Left lung (tissue), 14 donors: ENCODE measurements at regions of chr17 and their contacts with region 1.

Region 1: GRCh38 chr17:60639019-60639330 is 38.7 kb upstream of the BCAS3 start:
- DNase-seq: no peak
- ATAC-seq: no peak
- H3K4me3 ChIP-seq: no peak overlapping the region
- H3K27ac ChIP-seq: no peak overlapping the region
- H3K4me1 ChIP-seq: peaks cover 0 to 14% of the 10 kb centered on the region in 2 donors
- H3K27me3 ChIP-seq: no peaks in the 10 kb centered on the region
- CTCF ChIP-seq: no peak

Region 2: DNA sequence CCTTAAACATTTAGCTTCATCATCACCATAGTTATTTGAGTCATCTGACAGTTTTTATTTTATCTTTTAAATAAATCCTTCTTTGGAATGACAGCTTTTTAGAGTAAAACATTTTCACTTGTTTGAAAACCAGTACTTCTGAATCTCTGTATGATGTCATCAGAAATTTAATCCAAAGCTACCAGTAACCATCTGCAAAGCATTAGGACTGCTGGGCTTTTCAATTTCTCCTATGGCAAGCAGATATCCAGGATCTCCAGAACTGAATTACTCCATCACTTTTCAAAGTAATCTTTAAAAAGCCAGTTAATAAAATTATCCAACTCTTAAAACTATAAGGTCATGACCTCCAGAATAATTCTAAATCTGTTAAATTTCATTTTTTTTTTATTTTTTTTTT is 165.2 kb before region 1 on chr17:
- intact Hi-C with region 1: no loop called
- DNase-seq: no peak
- ATAC-seq: no peak
- H3K4me3 ChIP-seq: no peak overlapping the region
- H3K27ac ChIP-seq: no peak overlapping the region
- H3K4me1 ChIP-seq: peaks cover 0 to 13% of the 10 kb centered on the region in 2 donors
- H3K27me3 ChIP-seq: no peaks in the 10 kb centered on the region
- CTCF ChIP-seq: no peak

Region 3: DNA sequence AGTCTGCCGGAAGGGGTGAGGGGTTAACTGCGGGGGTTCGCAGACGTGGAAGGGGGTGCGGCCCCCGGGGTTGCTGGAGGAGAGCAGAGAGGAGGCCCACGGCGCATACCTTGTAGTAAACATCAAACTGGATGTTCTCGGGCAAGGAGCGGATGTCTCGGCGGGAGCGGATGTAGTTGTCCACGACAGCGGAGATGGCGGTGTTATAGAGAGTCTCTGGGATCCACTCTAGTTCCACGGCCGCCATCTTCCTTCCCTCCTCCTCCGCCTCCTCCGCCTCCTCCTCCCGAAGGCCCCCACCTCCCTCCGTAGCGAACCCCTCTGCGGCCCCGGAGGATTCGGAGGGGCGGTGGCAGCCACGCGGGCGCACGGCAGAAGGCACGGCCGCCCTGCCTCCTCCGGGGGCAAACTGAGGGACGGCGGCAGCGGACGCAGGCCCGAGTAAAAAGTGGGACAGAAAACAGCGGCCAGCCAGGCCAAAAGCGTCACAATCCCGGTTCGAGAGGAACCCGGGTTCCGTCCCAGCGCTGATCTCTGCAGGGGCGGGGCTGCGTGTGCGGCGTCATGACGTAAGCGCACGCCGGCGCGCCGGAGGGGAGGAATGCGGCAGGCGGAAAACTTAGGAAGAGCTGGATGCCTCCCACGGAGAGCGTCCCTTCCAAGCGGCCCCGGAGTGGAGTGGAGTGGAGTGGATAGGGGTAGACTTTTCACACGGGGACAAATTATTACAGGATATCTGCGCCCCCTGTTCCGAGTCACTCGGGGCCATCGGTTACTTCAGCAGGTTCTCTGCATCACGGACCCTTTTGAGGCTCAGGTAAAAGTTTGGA is 113.1 kb before region 1 on chr17 and contains the start of gene APPBP2:
- intact Hi-C with region 1: no loop called
- DNase-seq: peak; percentile 86 to 95 (median 93)
- ATAC-seq: peak; percentile 97
- H3K4me3 ChIP-seq: peak within 1 kb of the TSS; percentile 80 to 82
- H3K27ac ChIP-seq: peak within 1 kb of the TSS; percentile 98 to 99
- H3K4me1 ChIP-seq: peaks cover 28 to 40% of the 10 kb centered on the region in 2 donors
- H3K27me3 ChIP-seq: no peaks in the 10 kb centered on the region
- CTCF ChIP-seq: no peak
- polyA plus RNA-seq, gene APPBP2: 61.2 to 71.9 (median 64.9) TPM

Region 4: GRCh38 chr17:60573201-60574051 is 65.5 kb before region 1 on chr17:
- intact Hi-C with region 1: loop called in 1 of 2 experiments (anchors 5 kb)
- DNase-seq: no peak
- ATAC-seq: no peak
- H3K4me3 ChIP-seq: no peak overlapping the region
- H3K27ac ChIP-seq: peak overlapping the region in 1 of 2 donors; percentile 75
- H3K4me1 ChIP-seq: peaks cover 3 to 37% of the 10 kb centered on the region in 2 donors
- H3K27me3 ChIP-seq: no peaks in the 10 kb centered on the region
- CTCF ChIP-seq: no peak